ENCODE measurements at regions of chr3 and their contacts with region 1.

Region 1: DNA sequence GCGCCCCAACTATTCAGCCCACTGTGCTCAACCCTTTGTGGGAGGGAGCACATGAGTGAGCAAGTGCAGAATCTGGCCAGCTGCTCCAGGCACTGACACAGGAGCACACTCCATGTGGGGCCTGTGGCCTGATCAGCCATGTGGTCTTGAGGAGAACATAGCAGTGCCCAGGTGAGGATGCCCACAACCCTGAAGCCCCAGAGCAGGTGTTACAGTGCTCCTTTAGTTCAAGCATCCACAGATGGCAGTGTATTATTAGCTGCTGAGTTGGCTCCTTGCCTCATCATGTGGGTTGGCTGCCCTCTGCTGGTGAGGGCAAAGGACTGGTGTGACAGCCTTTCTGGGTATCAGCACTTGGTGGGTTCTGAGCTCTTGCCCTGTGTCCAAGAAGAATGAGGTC is 1588.2 kb downstream of the SI start:
- DNase-seq: peak; percentile 36 to 50
- H3K4me3 ChIP-seq: no peak overlapping the region
- H3K27ac ChIP-seq: no peak overlapping the region
- H3K4me1 ChIP-seq: no peaks in the 10 kb centered on the region
- H3K27me3 ChIP-seq: no peaks in the 10 kb centered on the region
- CTCF ChIP-seq: peak; percentile 80

Region 2: DNA sequence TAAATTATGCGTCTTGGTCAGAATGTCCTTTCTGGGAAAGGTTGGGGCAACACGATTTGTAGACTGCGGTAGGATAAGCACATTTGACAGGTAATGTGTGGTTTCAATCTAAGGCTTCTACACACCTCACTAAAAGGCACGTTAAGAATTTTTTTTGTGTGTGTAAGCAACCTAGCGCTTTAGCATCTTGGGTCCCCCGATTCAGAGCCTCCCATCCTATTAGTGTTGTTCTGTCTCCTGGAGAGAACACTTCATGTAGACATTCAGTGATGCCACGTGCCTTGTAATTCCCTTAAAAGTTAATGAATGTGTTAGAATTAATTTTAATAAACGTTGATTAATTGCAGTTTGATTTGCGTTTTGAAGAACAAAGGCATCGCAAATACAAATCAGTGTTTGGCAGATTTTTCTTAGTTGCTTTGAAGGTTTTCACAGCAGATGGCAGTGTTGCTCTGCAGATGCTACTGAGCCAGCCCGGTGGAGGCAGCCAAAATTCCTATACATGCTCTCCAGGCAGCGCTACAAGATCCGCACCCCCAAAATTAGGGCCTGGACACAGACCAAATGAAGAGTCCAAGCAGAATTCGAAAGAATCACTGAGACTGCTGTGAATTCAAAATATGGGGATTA is 1930.0 kb before region 1 on chr3:
- CTCF ChIA-PET with region 1: no interaction called
- POLR2A ChIA-PET with region 1: no interaction called
- intact Hi-C with region 1: loop called (anchors 1 kb)
- DNase-seq: peak in 1 of 2 experiments; percentile 46
- H3K4me3 ChIP-seq: no peak overlapping the region
- H3K27ac ChIP-seq: no peak overlapping the region
- H3K4me1 ChIP-seq: no peaks in the 10 kb centered on the region
- H3K27me3 ChIP-seq: no peaks in the 10 kb centered on the region
- CTCF ChIP-seq: peak; percentile 61

Region 3: GRCh38 chr3:162285259-162285658 is 1204.9 kb before region 1 on chr3:
- CTCF ChIA-PET with region 1: no interaction called
- POLR2A ChIA-PET with region 1: no interaction called
- intact Hi-C with region 1: loop called (anchors 5 kb)
- DNase-seq: no peak
- H3K4me3 ChIP-seq: no peak overlapping the region
- H3K27ac ChIP-seq: no peak overlapping the region
- H3K4me1 ChIP-seq: no peaks in the 10 kb centered on the region
- H3K27me3 ChIP-seq: no peaks in the 10 kb centered on the region
- CTCF ChIP-seq: no peak

Region 4: DNA sequence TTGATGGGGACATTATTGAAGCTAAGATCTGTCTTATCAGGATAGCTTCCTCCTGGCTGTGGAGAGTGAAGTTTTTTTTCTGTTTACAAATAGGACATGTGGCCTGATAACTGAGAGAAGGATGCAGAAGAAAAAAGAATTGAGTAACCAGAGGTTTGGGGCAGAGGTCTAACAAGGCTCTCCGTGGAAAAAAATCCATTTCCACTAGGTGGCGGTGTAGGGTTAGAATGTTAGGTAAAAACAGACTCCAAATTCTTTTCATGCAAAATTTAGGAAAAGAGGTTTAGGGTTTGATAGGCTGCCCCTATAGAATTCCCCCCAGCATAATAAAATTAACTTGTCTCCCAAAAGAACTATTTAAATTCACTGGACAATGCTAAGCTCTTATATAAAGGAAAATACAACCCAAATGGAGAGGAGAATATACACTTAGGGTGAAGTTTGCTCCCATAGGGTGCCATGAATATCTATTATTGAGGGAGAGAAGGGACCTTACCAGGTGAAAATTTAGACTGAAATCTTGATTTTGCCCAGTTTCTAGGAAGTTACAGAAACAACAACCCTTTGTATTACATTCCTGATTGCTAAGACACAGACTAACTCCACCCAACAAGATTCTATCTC is 433.1 kb before region 1 on chr3:
- CTCF ChIA-PET with region 1: no interaction called
- POLR2A ChIA-PET with region 1: no interaction called
- intact Hi-C with region 1: loop called (anchors 5 kb)
- DNase-seq: peak in 1 of 2 experiments; percentile 39
- H3K4me3 ChIP-seq: no peak overlapping the region
- H3K27ac ChIP-seq: no peak overlapping the region
- H3K4me1 ChIP-seq: no peaks in the 10 kb centered on the region
- H3K27me3 ChIP-seq: no peaks in the 10 kb centered on the region
- CTCF ChIP-seq: peak; percentile 78

Region 5: GRCh38 chr3:165185707-165186327 is 1695.7 kb after region 1 on chr3:
- CTCF ChIA-PET with region 1: no interaction called
- POLR2A ChIA-PET with region 1: no interaction called
- intact Hi-C with region 1: loop called (anchors 5 kb)
- DNase-seq: peak; percentile 41 to 55
- H3K4me3 ChIP-seq: no peak overlapping the region
- H3K27ac ChIP-seq: no peak overlapping the region
- H3K4me1 ChIP-seq: no peaks in the 10 kb centered on the region
- H3K27me3 ChIP-seq: no peaks in the 10 kb centered on the region
- CTCF ChIP-seq: peak; percentile 94

Measured in PC-9 (cell line).